ENCODE measurements at regions of chr15 and their contacts with region 1.

Region 1: DNA sequence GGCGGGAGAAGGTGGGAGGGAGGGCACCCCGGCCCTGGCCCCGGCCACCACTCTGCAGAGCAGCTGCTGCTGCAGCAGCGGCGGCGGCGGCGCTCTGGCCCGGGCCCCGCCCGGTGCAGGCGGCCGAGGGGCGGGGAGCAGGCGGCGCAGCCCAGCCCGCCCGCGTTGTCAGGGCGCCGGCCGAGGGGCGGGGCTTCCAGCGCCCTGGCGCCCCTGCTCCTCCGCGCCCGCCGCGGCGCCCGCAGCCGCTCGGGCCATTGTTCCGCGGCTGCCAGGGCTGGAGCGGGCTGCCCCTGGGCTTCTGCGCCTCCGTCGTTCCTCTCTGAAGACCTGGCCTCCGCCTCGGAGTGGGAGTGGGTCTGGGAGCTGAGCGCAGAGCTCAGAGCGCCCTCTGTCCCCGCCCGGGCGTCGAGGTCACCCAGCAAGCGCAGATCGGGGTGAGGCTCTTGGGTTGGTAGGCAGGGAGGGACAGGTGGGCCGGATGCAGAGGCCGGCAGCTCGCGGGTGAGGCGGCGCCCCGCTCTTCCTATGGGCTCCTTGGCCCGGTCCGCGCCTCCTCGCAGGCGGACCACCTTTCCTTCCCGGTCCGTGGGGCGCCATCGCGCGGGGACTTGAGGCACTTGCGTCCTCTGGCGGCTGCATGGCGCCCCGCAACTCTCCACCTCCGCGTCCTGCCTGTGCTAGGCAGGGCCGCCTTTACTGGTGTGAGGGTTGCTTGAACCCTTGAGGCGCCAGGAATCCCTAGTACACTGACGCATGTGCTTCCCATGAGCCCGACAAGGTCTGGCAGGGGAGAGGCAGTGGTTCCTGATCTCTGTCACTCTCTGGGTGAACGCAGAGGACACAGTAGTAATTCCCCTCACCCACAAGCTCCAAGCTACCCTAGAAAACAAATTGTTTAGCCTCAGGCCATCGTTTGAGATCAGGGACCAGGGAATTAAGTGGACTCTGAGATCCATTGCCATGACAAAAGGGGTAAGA is at the start of gene LPCAT4:
- DNase-seq: peak; percentile 65
- H3K4me3 ChIP-seq: peak within 1 kb of the TSS; percentile 88 to 95 (median 92)
- H3K27ac ChIP-seq: peak within 1 kb of the TSS; percentile 98 to 100 (median 99)
- H3K4me1 ChIP-seq: peaks cover 3 to 58% (median 15%) of the 10 kb centered on the region in 3 donors
- H3K27me3 ChIP-seq: no peaks in the 10 kb centered on the region
- CTCF ChIP-seq: peak; percentile 91 to 98 (median 96)
- POLR2A ChIP-seq: peak in 2 of 4 donors; percentile 54 to 68
- total RNA-seq, gene LPCAT4: 11.8 to 40.2 (median 32.6) TPM

Region 2: GRCh38 chr15:34223904-34224596 is 143.3 kb before region 1 on chr15:
- intact Hi-C with region 1: no loop called
- DNase-seq: no peak
- H3K4me3 ChIP-seq: peak overlapping the region; percentile 68 to 96 (median 86)
- H3K27ac ChIP-seq: peak overlapping the region; percentile 86 to 93 (median 91)
- H3K4me1 ChIP-seq: peaks cover 8 to 35% (median 20%) of the 10 kb centered on the region in 3 donors
- H3K27me3 ChIP-seq: no peaks in the 10 kb centered on the region
- CTCF ChIP-seq: no peak
- POLR2A ChIP-seq: no peak

Region 3: DNA sequence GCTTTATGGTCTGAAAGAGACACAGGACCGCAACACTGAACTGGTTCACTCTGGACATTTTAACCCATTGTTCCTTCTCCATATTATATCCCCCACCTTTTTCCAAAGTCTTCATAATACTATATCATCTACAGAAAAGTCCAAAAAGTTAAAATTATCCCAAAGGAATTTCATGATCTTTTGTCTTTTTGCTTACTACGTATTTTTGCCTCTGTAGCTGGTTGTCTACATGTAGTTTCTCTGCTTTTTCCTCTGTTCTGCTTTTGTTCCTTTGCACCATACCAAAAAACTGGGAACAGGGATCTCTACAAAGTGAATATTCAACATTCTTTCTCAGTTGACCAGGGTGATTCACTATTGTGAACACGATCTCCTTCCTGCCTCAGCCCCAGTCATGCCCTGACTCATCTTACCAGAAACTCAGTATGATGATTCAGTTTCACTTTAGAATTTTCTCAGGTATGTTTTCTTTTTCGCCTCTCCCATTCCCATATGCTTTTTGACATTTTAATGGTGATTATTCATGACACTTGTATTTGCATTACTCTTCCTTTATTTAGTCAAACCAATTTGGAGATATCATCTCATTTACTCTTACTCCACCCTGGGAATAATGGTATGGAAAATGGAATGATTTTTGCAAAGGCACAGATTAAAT is 128.1 kb before region 1 on chr15:
- intact Hi-C with region 1: loop called (anchors 10 kb)
- DNase-seq: no peak
- H3K4me3 ChIP-seq: no peak overlapping the region
- H3K27ac ChIP-seq: peak overlapping the region; percentile 51 to 85 (median 77)
- H3K4me1 ChIP-seq: peaks cover 0 to 31% (median 0%) of the 10 kb centered on the region in 3 donors
- H3K27me3 ChIP-seq: no peaks in the 10 kb centered on the region
- CTCF ChIP-seq: no peak
- POLR2A ChIP-seq: no peak